ENCODE measurements at regions of chr18 and their contacts with region 1.

Region 1: GRCh38 chr18:7566567-7567473 is at the start of gene PTPRM:
- DNase-seq: peak; percentile 77
- H3K4me3 ChIP-seq: peak within 1 kb of the TSS; percentile 56 to 93 (median 68)
- H3K27ac ChIP-seq: peak within 1 kb of the TSS; percentile 74
- H3K4me1 ChIP-seq: peaks cover 20% of the 10 kb centered on the region
- H3K27me3 ChIP-seq: no peaks in the 10 kb centered on the region
- CTCF ChIP-seq: peak; percentile 28 to 41
- POLR2A ChIP-seq: peak; percentile 13
- total RNA-seq, gene PTPRM: 34.7 and 43.7 TPM in 2 replicates

Region 2: GRCh38 chr18:7329016-7329415 is 237.8 kb before region 1 on chr18:
- CTCF ChIA-PET with region 1: interaction called, 24 read pairs
- POLR2A ChIA-PET with region 1: no interaction called
- dilution Hi-C with region 1: no loop called
- intact Hi-C with region 1: loop called (anchors 2 kb)
- DNase-seq: no peak
- H3K4me3 ChIP-seq: no peak overlapping the region
- H3K27ac ChIP-seq: no peak overlapping the region
- H3K4me1 ChIP-seq: peaks cover 24% of the 10 kb centered on the region
- H3K27me3 ChIP-seq: no peaks in the 10 kb centered on the region
- CTCF ChIP-seq: no peak
- POLR2A ChIP-seq: no peak

Region 3: DNA sequence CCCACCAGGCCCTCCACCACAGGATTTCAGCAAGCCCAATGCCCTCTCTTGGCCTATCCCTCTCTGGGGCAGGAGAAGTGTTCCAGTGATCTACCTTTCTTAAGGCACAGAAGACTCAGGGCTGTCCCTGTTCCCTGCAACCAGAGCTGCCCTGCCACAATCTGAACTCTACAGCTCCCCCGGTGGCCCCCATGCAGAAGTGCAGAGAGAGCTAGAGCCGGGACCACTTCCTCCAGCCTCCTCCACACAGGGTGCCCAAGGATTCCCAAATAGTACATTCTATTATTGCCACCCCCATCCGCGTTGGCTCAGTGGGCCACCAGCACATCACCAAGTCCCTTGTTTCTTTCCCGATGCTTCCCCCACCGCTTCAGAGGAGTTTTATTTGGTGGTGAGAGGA is 114.5 kb before region 1 on chr18:
- CTCF ChIA-PET with region 1: interaction called, 26 read pairs
- POLR2A ChIA-PET with region 1: no interaction called
- dilution Hi-C with region 1: no loop called
- intact Hi-C with region 1: loop called (anchors 2 kb)
- DNase-seq: peak; percentile 32
- H3K4me3 ChIP-seq: no peak overlapping the region
- H3K27ac ChIP-seq: no peak overlapping the region
- H3K4me1 ChIP-seq: no peaks in the 10 kb centered on the region
- H3K27me3 ChIP-seq: peaks cover 2 to 4% of the 10 kb centered on the region in 2 experiments
- CTCF ChIP-seq: peak; percentile 61 to 80
- POLR2A ChIP-seq: no peak

Region 4: GRCh38 chr18:7749510-7749981 is 182.7 kb after region 1 on chr18:
- CTCF ChIA-PET with region 1: no interaction called
- POLR2A ChIA-PET with region 1: no interaction called
- dilution Hi-C with region 1: no loop called
- intact Hi-C with region 1: loop called (anchors 5 kb)
- DNase-seq: peak; percentile 45
- H3K4me3 ChIP-seq: no peak overlapping the region
- H3K27ac ChIP-seq: no peak overlapping the region
- H3K4me1 ChIP-seq: peaks cover 28% of the 10 kb centered on the region
- H3K27me3 ChIP-seq: no peaks in the 10 kb centered on the region
- CTCF ChIP-seq: no peak
- POLR2A ChIP-seq: no peak

Region 5: GRCh38 chr18:8389391-8390340 is 822.8 kb after region 1 on chr18:
- CTCF ChIA-PET with region 1: interaction called, 3 read pairs
- POLR2A ChIA-PET with region 1: no interaction called
- dilution Hi-C with region 1: no loop called
- intact Hi-C with region 1: loop called (anchors 1 kb)
- DNase-seq: peak; percentile 78
- H3K4me3 ChIP-seq: no peak overlapping the region
- H3K27ac ChIP-seq: no peak overlapping the region
- H3K4me1 ChIP-seq: peaks cover 4% of the 10 kb centered on the region
- H3K27me3 ChIP-seq: no peaks in the 10 kb centered on the region
- CTCF ChIP-seq: peak; percentile 81 to 82
- POLR2A ChIP-seq: no peak